CD4-positive, alpha-beta T cell (primary cell): ENCODE measurements at regions of chr1 and their contacts with region 1.

Region 1: GRCh38 chr1:206816390-206817287 is 44.3 kb upstream of the IL10 start:
- DNase-seq: peak in 3 of 14 experiments; percentile 77 to 80 (median 77)
- ATAC-seq: peak; percentile 92
- H3K4me3 ChIP-seq: no peak overlapping the region
- H3K4me3 Mint-ChIP-seq: peak overlapping the region; percentile 54
- H3K27ac ChIP-seq: peak overlapping the region in 1 of 2 donors; percentile 61
- H3K27ac Mint-ChIP-seq: peak overlapping the region; percentile 79
- H3K4me1 ChIP-seq: peaks cover 7% of the 10 kb centered on the region
- H3K4me1 Mint-ChIP-seq: peaks cover 30% of the 10 kb centered on the region
- H3K27me3 ChIP-seq: no peaks in the 10 kb centered on the region
- H3K27me3 Mint-ChIP-seq: no peaks in the 10 kb centered on the region
- CTCF ChIP-seq: no peak

Region 2: DNA sequence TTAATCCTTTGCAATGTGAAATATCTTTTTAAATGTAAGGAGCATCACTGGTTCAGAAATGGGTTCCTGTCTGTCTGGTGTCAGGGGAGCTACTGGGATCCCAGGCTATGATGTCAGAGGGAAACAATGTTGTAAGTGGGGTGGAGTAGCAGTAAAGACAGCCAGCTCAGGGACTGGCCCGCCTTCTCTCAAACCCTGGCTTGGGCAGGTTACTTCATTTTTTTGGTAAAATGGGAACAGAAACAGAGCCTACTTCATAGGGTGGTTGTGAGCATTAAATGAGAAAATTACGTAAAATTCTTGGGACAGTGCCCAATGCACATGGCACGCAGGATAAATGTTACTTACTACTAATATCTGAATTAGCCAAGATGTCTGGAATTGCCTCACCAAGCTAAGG is 18.1 kb after region 1 on chr1:
- CTCF ChIA-PET with region 1: interaction called, 3 read pairs
- POLR2A ChIA-PET with region 1: interaction called, 10 read pairs
- intact Hi-C with region 1: loop called in 1 of 2 experiments (anchors 2 kb)
- DNase-seq: peak in 2 of 14 experiments; percentile 49 to 60
- ATAC-seq: no peak
- H3K4me3 ChIP-seq: no peak overlapping the region
- H3K4me3 Mint-ChIP-seq: no peak overlapping the region
- H3K27ac ChIP-seq: no peak overlapping the region
- H3K27ac Mint-ChIP-seq: no peak overlapping the region
- H3K4me1 ChIP-seq: peaks cover 4% of the 10 kb centered on the region
- H3K4me1 Mint-ChIP-seq: peaks cover 16% of the 10 kb centered on the region
- H3K27me3 ChIP-seq: peaks cover 0 to 7% of the 10 kb centered on the region in 2 experiments
- H3K27me3 Mint-ChIP-seq: peaks cover 6% of the 10 kb centered on the region
- CTCF ChIP-seq: no peak

Region 3: DNA sequence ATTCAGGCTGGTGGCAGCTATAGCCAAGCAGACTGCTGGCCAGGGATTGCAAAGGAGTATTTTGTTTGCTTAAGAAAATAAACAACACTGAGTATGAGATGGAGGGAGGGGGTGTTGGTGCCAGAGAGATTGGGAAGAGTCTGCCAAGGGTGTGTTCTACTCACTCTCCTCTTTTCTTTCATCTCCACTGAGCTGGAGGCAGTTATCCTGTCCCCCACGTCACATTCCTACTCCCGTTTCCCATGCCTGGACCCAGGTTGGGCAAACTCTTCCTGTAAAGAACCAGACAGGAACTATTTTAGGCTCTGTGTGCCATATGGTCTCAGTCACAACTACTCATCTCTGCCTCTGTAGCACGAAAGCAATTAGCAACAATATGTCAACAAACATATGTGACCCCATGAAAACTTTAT is 79.2 kb after region 1 on chr1:
- CTCF ChIA-PET with region 1: no interaction called
- POLR2A ChIA-PET with region 1: interaction called, 11 read pairs
- intact Hi-C with region 1: no loop called
- DNase-seq: no peak
- ATAC-seq: no peak
- H3K4me3 ChIP-seq: no peak overlapping the region
- H3K4me3 Mint-ChIP-seq: no peak overlapping the region
- H3K27ac ChIP-seq: no peak overlapping the region
- H3K27ac Mint-ChIP-seq: peak overlapping the region; percentile 5
- H3K4me1 ChIP-seq: peaks cover 34% of the 10 kb centered on the region
- H3K4me1 Mint-ChIP-seq: peaks cover 72% of the 10 kb centered on the region
- H3K27me3 ChIP-seq: no peaks in the 10 kb centered on the region
- H3K27me3 Mint-ChIP-seq: no peaks in the 10 kb centered on the region
- CTCF ChIP-seq: no peak